Activated CD8-positive, alpha-beta T cell treated with anti-CD3 and anti-CD28 coated beads, Interleukin-2, amount 10 ng/mL, durations not matched to agents 7 days and 5 days (primary cell): ENCODE measurements at regions of chr1 and their contacts with region 1.

Region 1: GRCh38 chr1:93304716-93305138 is 41.0 kb upstream of the DR1 start:
- DNase-seq: peak; percentile 67
- ATAC-seq: peak; percentile 51
- H3K4me3 Mint-ChIP-seq: no peak overlapping the region
- H3K27ac Mint-ChIP-seq: no peak overlapping the region
- H3K4me1 Mint-ChIP-seq: no peaks in the 10 kb centered on the region
- H3K27me3 Mint-ChIP-seq: no peaks in the 10 kb centered on the region

Region 2: GRCh38 chr1:93078986-93079654 is 225.6 kb before region 1 on chr1 and contains the start of gene MTF2:
- CTCF ChIA-PET with region 1: interaction called, 25 read pairs
- POLR2A ChIA-PET with region 1: no interaction called
- DNase-seq: peak; percentile 96
- ATAC-seq: peak; percentile 94
- H3K4me3 Mint-ChIP-seq: peak within 1 kb of the TSS; percentile 97
- H3K27ac Mint-ChIP-seq: peak within 1 kb of the TSS; percentile 98
- H3K4me1 Mint-ChIP-seq: peaks cover 37% of the 10 kb centered on the region
- H3K27me3 Mint-ChIP-seq: peaks cover 2% of the 10 kb centered on the region
- total RNA-seq, gene MTF2: 56.4 to 63.2 TPM

Region 3: DNA sequence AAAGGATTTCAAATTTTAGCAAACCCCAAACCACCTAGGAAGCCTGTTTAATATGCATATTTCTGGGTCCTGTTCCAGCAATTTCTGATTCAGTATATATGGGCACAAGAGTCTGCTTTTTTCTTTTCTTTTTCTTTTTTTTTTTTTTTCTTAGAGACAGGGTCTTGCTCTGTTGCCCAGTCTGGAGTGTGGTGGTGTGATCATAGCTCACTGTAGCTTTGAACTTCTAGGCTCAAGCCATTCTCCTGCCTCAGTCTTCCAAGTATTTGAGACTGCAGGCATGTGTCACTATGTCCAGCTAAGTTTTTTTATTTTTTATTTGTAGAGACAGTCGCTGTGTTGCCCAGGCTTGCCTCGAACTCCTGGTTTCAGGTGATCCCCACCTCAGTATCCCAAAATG is 89.4 kb before region 1 on chr1:
- CTCF ChIA-PET with region 1: no interaction called
- POLR2A ChIA-PET with region 1: no interaction called
- DNase-seq: no peak
- ATAC-seq: no peak
- H3K4me3 Mint-ChIP-seq: no peak overlapping the region
- H3K27ac Mint-ChIP-seq: no peak overlapping the region
- H3K4me1 Mint-ChIP-seq: peaks cover 19% of the 10 kb centered on the region
- H3K27me3 Mint-ChIP-seq: no peaks in the 10 kb centered on the region

Region 4: DNA sequence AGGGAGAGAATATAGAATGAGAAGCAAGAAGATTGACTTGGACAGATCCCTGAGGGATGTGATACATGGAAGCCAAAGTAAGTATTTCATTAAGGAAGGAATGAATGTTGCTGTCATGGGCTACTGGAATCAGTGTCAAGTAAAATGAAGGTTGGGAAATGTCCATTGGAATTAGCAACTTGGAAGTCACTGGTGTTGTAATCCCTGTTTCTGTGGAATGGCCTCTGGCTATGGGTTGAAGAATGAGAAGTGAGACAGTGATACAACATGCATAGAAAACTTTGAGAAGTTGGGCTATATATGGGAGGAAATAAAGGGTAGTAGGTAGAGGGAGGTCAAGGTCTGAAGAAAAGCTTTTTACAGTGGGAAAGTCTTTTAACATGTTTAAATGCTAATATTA is 69.5 kb before region 1 on chr1:
- CTCF ChIA-PET with region 1: no interaction called
- POLR2A ChIA-PET with region 1: no interaction called
- DNase-seq: no peak
- ATAC-seq: no peak
- H3K4me3 Mint-ChIP-seq: no peak overlapping the region
- H3K27ac Mint-ChIP-seq: no peak overlapping the region
- H3K4me1 Mint-ChIP-seq: no peaks in the 10 kb centered on the region
- H3K27me3 Mint-ChIP-seq: no peaks in the 10 kb centered on the region

Region 5: DNA sequence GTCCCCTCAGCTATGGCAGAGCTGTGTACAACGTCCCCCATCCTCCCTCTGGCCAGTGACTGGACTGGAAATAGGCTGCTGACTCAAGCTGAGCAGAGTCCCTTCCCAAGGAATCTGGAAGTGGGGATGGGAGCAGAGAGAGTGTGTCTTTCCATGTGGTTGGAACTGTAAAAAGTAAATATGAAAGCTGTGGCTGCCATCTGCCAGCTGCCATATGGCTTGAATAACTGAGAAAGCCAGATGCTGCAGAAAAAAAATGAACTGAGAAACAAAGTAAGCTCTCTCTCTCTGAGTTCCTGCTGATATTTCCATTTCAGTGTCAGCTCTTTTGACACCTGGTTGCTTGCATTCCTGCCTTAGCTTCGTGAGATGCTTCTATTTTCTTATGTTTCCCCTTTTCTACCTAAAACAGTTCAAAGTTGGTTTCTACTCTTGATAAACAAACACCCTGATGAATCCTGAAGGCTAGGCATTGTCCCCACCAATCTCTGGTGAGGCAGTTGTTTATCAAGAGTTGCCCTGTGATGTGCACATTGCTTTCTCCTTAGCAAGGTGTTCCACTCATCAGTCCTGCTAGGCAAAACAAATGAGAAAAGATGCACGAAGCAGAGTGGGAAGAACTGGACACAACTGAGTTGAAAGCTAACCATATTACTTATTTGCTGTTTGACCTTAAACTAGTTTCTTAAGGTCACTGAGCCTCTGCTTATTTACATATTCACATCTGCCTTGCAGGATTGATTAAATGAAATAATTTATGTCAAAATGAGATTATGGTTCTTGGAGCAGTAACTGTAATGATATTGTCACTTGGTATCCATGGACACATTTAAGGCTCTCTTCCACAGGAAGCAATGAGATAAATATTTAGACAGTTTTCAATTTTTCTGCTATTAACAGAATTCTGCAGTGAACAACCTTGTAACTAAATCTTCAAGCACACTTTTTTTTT is 24.4 kb after region 1 on chr1:
- CTCF ChIA-PET with region 1: interaction called, 18 read pairs
- POLR2A ChIA-PET with region 1: no interaction called
- DNase-seq: no peak
- ATAC-seq: no peak
- H3K4me3 Mint-ChIP-seq: no peak overlapping the region
- H3K27ac Mint-ChIP-seq: no peak overlapping the region
- H3K4me1 Mint-ChIP-seq: no peaks in the 10 kb centered on the region
- H3K27me3 Mint-ChIP-seq: no peaks in the 10 kb centered on the region

Region 6: DNA sequence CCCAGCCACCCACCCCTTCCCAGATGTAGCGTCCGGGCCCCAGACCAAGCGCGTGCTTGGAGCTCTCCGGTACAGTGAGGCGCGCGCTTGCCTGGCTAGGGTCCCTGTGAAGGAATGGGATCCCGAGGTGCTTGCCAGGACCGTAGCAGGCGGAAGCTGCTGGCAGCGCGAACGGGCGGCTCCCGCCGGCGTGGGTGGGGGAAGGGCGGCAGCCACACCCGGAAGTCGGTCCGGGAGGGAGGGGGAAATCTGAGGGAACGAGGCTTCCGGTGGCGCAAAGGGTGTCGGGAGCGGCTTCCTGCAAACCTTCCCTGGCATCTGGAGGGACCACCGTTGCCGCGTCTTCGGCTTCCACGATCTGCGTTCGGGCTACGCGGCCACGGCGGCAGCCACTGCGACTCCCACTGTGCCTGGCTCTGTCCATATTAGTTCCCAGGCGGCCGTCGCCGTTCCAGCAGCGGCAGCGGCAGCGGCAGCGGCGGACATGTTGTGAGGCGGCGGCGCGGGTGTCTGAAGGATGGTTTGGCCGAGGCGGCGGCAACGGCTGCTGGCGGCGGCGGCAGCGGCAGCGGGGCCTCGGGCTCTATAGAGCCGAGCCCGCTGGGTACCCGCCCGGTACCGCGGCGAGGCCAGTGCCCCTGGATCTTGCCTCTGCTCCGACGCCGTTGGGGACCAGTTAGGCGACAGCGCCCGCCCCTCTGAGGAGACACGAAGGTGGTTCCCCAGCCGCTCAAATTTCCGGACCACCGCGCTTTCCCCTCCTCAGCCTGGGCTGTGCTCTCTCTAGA is 41.1 kb after region 1 on chr1 and contains the start of gene DR1:
- CTCF ChIA-PET with region 1: interaction called, 26 read pairs
- POLR2A ChIA-PET with region 1: interaction called, 11 read pairs
- DNase-seq: peak; percentile 93
- ATAC-seq: peak; percentile 71
- H3K4me3 Mint-ChIP-seq: peak within 1 kb of the TSS; percentile 91
- H3K27ac Mint-ChIP-seq: peak within 1 kb of the TSS; percentile 98
- H3K4me1 Mint-ChIP-seq: peaks cover 19% of the 10 kb centered on the region
- H3K27me3 Mint-ChIP-seq: no peaks in the 10 kb centered on the region
- total RNA-seq, gene DR1: 94.0 to 94.1 TPM

Region 7: DNA sequence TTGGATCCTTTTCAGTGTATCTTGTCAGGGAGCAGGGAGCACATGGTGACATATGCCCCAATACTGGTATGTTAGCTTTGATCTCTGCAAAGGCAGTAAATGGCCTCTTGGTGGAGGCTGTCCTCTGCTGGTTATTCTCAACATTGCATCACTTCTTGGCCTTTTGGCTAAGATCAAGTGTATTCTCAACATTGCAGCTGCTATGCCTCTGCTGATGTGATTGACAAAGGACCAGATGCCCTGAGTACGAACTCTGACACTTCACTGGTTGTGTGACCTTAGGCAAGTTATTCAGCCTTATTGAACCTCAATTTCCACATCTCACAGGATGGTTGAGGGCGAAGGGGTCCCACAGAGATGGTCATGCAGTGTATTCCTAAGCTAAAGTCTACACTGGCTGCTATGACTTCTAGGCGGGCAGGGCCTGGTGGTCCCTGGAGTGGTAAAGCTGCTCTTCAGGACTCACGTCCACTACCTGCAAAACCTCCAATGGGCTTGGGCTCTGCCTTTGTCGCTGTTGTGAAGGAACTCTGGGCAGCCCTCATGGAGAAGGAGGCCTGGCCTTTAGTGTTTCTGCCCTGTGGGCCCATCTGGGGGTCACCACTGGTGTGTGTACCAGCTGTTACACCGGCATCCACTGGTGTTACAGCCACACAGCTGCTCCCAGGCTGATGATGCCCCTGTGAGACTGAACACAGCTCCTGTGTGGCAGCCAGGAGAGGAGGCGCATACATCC is 509.5 kb after region 1 on chr1:
- CTCF ChIA-PET with region 1: interaction called, 10 read pairs
- POLR2A ChIA-PET with region 1: no interaction called
- DNase-seq: peak; percentile 71
- ATAC-seq: peak; percentile 72
- H3K4me3 Mint-ChIP-seq: no peak overlapping the region
- H3K27ac Mint-ChIP-seq: no peak overlapping the region
- H3K4me1 Mint-ChIP-seq: peaks cover 19% of the 10 kb centered on the region
- H3K27me3 Mint-ChIP-seq: no peaks in the 10 kb centered on the region